ENCODE measurements at regions of chr16 and their contacts with region 1.

Region 1: DNA sequence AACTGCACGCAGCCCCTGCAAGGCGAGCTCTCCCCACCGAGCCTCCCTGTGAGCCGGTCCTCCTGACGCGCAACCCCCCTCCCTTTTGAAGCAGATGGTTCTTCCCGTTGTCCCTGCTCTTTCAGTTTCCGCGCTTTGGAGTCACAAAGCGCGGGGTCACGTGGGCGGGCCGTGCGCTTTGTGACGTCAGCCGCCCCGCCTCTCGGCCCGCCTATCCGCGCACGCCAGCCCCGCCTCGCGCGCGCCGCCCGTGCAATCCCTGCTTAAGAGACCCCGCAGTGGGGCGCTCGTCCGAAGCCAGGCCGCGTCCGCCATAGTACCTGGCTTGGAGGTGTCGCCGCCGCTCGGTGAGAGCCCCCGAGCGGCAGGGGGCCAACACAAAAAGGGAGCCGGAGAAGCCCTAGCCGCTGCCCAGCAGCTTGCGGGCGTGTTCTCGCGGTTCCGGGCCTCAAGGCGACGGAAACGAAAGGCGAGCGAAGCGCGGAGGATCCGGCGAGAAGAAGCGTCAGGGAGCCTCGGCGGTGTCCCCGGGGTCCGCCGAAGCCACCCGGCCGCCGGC is at the start of gene RBBP6:
- DNase-seq: peak; percentile 89
- H3K4me3 Mint-ChIP-seq: peak within 1 kb of the TSS; percentile 100
- H3K27ac Mint-ChIP-seq: peak within 1 kb of the TSS; percentile 100
- H3K4me1 Mint-ChIP-seq: peaks cover 24% of the 10 kb centered on the region
- H3K27me3 Mint-ChIP-seq: no peaks in the 10 kb centered on the region
- total RNA-seq, gene RBBP6: 63.8 and 65.4 TPM in 2 replicates

Region 2: GRCh38 chr16:23835390-23836077 is 703.8 kb before region 1 on chr16 and contains the start of gene PRKCB:
- intact Hi-C with region 1: loop called (anchors 5 kb)
- DNase-seq: peak; percentile 88
- H3K4me3 Mint-ChIP-seq: peak within 1 kb of the TSS; percentile 97
- H3K27ac Mint-ChIP-seq: peak within 1 kb of the TSS; percentile 79
- H3K4me1 Mint-ChIP-seq: peaks cover 58% of the 10 kb centered on the region
- H3K27me3 Mint-ChIP-seq: no peaks in the 10 kb centered on the region
- total RNA-seq, gene PRKCB: 69.0 and 69.5 TPM in 2 replicates

Region 3: GRCh38 chr16:24609417-24609739 is 70.0 kb after region 1 on chr16:
- intact Hi-C with region 1: no loop called
- DNase-seq: no peak
- H3K4me3 Mint-ChIP-seq: no peak overlapping the region
- H3K27ac Mint-ChIP-seq: no peak overlapping the region
- H3K4me1 Mint-ChIP-seq: peaks cover 9% of the 10 kb centered on the region
- H3K27me3 Mint-ChIP-seq: peaks cover 45% of the 10 kb centered on the region

Region 4: DNA sequence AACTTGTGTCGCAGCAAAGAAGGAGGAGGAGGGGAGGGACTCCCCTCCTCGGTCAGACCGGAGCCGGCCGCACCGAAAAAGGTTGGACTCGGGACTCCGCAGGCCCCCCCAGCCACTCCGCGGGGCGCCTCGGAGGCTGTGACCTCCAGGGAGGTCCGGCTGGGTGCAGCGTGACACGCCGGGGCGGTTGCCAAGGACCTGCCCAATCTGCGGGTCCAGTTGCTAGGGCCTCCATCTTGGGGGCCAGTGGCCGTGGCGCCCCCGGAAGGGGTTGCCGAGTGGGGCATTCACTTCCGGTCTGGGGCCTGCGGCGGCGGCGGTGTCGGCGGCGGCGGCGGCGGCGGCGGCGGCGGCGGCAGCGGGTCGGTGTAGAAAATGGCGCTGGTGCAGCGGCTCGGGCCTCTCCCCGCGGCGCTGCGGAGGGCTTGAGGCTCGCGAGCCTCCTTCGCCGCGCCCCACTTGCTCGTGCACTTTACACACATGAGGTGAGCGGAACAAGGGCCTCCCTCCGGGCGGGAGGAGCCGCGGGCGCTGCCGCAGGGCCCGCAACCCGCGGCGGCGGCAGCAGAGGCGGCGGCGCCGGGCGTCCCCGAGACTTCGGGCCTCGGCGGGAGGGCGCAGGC is 190.1 kb after region 1 on chr16 and contains the start of gene TNRC6A:
- intact Hi-C with region 1: loop called (anchors 2 kb)
- DNase-seq: peak; percentile 74
- H3K4me3 Mint-ChIP-seq: peak within 1 kb of the TSS; percentile 98
- H3K27ac Mint-ChIP-seq: peak within 1 kb of the TSS; percentile 97
- H3K4me1 Mint-ChIP-seq: peaks cover 36% of the 10 kb centered on the region
- H3K27me3 Mint-ChIP-seq: peaks cover 3% of the 10 kb centered on the region
- total RNA-seq, gene TNRC6A: 47.3 and 50.3 TPM in 2 replicates

Region 5: GRCh38 chr16:25257504-25257955 is 718.2 kb after region 1 on chr16 and contains the start of gene ZKSCAN2:
- intact Hi-C with region 1: loop called (anchors 5 kb)
- DNase-seq: peak; percentile 83
- H3K4me3 Mint-ChIP-seq: peak within 1 kb of the TSS; percentile 87
- H3K27ac Mint-ChIP-seq: peak within 1 kb of the TSS; percentile 95
- H3K4me1 Mint-ChIP-seq: peaks cover 43% of the 10 kb centered on the region
- H3K27me3 Mint-ChIP-seq: no peaks in the 10 kb centered on the region
- total RNA-seq, gene ZKSCAN2: 6.4 and 7.9 TPM in 2 replicates